ENCODE measurements at regions of chr2 and their contacts with region 1.

Region 1: GRCh38 chr2:238438856-238439849 is 12.4 kb downstream of the ASB1 start:
- DNase-seq: peak; percentile 100
- H3K4me3 ChIP-seq: peak overlapping the region; percentile 6 to 29 (median 22)
- H3K27ac ChIP-seq: peak overlapping the region; percentile 97
- H3K4me1 ChIP-seq: peaks cover 29% of the 10 kb centered on the region
- H3K27me3 ChIP-seq: no peaks in the 10 kb centered on the region
- CTCF ChIP-seq: no peak

Region 2: GRCh38 chr2:238143239-238143951 is 295.8 kb before region 1 on chr2:
- CTCF ChIA-PET with region 1: no interaction called
- dilution Hi-C with region 1: no loop called
- in situ Hi-C with region 1: no loop called
- intact Hi-C with region 1: no loop called
- DNase-seq: peak; percentile 69
- H3K4me3 ChIP-seq: no peak overlapping the region
- H3K27ac ChIP-seq: no peak overlapping the region
- H3K4me1 ChIP-seq: peaks cover 36% of the 10 kb centered on the region
- H3K27me3 ChIP-seq: no peaks in the 10 kb centered on the region
- CTCF ChIP-seq: no peak

Region 3: DNA sequence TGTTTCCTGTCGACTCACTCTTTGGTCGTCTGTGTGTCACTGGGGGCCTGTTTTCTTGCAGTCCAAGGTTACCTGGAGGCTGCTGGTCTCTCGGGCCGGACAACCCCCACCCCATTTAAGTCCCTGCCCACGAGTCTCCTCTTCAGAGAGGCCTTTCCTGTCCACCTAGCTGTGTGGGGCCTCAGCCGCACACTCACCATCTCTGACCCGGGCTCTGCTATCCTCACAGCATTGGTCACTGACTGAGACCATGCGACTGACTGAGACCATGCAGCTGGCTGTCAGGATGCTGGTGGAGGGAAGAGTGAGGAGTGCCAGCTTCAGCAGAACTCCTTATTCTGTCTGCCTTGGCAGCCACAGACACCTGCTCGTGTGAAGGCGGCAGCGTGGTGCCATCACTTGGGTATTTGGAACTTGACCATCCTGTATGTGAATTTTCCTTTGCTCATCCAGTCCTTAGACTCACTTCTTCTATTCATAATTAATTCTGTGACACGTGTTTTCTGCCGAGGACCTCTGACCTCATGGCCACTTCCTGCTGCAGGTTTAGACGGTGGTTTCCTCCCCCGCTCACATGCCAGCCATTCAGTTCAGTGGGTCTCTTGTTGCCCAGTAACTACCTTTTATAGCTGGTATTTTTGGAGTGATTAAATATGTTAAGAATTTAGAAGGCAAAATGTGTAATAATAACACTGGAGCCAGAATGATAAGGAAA is 59.9 kb before region 1 on chr2:
- CTCF ChIA-PET with region 1: no interaction called
- dilution Hi-C with region 1: no loop called
- in situ Hi-C with region 1: no loop called
- intact Hi-C with region 1: loop called (anchors 1 kb)
- DNase-seq: peak; percentile 84
- H3K4me3 ChIP-seq: no peak overlapping the region
- H3K27ac ChIP-seq: peak overlapping the region; percentile 61
- H3K4me1 ChIP-seq: peaks cover 32% of the 10 kb centered on the region
- H3K27me3 ChIP-seq: no peaks in the 10 kb centered on the region
- CTCF ChIP-seq: no peak

Region 4: GRCh38 chr2:238420878-238421694 is 18.1 kb before region 1 on chr2:
- CTCF ChIA-PET with region 1: no interaction called
- dilution Hi-C with region 1: no loop called
- in situ Hi-C with region 1: no loop called
- intact Hi-C with region 1: no loop called
- DNase-seq: peak; percentile 36
- H3K4me3 ChIP-seq: no peak overlapping the region
- H3K27ac ChIP-seq: no peak overlapping the region
- H3K4me1 ChIP-seq: peaks cover 10% of the 10 kb centered on the region
- H3K27me3 ChIP-seq: no peaks in the 10 kb centered on the region
- CTCF ChIP-seq: no peak

Region 5: DNA sequence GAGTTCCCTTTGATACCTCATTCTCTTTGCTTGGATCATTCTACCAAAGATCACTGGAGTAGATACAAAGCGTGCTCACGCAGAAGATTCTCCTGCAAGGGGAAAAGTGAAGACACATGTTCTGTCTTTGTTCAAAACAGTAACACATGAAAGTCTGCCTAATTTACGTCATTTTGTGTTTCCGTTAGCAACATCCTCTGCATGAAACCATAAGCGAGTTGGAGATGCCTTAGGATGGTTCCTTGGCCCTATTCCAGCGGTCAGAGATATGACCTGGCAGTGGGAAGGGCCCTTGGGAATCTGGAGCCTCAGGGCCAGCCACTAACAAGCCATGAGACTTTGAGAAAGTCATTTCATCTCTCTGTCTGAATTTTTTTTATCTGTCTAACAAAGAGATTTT is 227.9 kb after region 1 on chr2:
- CTCF ChIA-PET with region 1: no interaction called
- dilution Hi-C with region 1: no loop called
- in situ Hi-C with region 1: no loop called
- intact Hi-C with region 1: no loop called
- DNase-seq: no peak
- H3K4me3 ChIP-seq: no peak overlapping the region
- H3K27ac ChIP-seq: no peak overlapping the region
- H3K4me1 ChIP-seq: peaks cover 8% of the 10 kb centered on the region
- H3K27me3 ChIP-seq: no peaks in the 10 kb centered on the region
- CTCF ChIP-seq: no peak

Region 6: DNA sequence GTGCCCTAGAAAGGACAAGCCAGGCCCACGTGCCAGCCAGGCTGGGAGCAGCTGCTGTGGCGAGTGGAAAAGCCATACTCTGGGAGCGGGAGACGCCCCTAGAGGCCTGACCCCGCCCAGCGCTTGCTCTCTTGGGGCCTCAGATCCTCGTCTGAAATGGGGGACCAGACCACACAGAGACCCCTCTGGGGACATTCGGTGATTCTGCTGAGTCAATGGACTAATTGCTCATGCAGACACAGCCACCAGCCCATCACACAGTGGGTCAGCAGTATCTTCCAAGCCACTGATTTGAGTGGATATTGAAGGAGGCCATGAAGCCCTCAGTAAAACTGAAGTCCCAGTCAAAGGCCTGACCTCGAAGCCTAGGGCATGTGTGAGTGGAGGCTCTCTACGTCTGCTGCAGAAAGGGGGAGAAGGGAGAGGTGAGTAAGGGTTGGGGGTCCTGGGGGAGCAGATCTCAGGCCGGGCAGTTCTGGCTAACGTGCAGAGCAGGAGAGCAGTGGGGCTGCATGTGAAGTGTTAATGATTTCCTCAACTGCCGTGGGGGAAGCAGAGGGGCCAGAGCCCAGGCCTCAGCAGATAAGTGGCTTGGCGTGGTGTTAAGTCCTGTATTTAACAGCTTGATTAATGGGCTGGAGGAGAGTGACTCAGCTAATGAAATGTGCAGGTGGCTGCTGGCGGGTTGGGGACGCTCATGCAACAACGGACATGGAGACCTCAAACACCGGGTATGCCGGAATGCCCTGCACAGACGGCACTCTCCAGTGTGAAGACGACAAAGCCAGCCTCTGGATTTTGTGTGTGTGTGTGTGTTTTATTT is 304.3 kb after region 1 on chr2:
- CTCF ChIA-PET with region 1: no interaction called
- dilution Hi-C with region 1: no loop called
- in situ Hi-C with region 1: no loop called
- intact Hi-C with region 1: no loop called
- DNase-seq: no peak
- H3K4me3 ChIP-seq: no peak overlapping the region
- H3K27ac ChIP-seq: no peak overlapping the region
- H3K4me1 ChIP-seq: no peaks in the 10 kb centered on the region
- H3K27me3 ChIP-seq: no peaks in the 10 kb centered on the region
- CTCF ChIP-seq: no peak

Measured in mammary epithelial cell (primary cell).